ENCODE measurements at regions of chr11 and their contacts with region 1.

Region 1: GRCh38 chr11:108525161-108525560 is 27.0 kb upstream of the POGLUT3 start:
- DNase-seq: no peak
- ATAC-seq: no peak
- H3K4me3 ChIP-seq: no peak overlapping the region
- H3K27ac ChIP-seq: no peak overlapping the region
- H3K4me1 ChIP-seq: no peaks in the 10 kb centered on the region
- H3K27me3 ChIP-seq: peaks cover 0 to 3% (median 0%) of the 10 kb centered on the region in 7 donors
- CTCF ChIP-seq: no peak

Region 2: DNA sequence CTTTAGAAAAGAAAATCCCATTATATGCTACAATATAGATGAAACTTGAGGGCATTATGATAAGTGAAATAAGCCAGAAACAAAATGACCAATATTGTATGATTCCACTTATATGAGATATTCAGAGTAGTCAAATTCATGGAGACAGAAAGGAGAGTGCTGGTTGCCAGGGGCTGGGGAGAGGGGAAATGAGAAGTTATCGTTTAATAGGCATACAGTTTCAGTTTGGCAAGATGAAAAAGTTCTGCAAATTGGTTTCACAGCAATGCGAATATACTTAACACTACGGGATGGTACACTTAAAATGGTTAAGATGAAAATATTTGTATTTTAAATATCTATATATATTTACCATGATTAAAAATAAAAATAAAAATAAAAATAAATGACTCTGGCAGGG is 1802.3 kb after region 1 on chr11:
- intact Hi-C with region 1: loop called in 1 of 10 experiments (anchors 5 kb)
- DNase-seq: no peak
- ATAC-seq: no peak
- H3K4me3 ChIP-seq: no peak overlapping the region
- H3K27ac ChIP-seq: no peak overlapping the region
- H3K4me1 ChIP-seq: no peaks in the 10 kb centered on the region
- H3K27me3 ChIP-seq: no peaks in the 10 kb centered on the region
- CTCF ChIP-seq: no peak

Measured in heart right ventricle (tissue), 16 donors.